HAP-1 (cell line): ENCODE measurements at regions of chr14 and their contacts with region 1.

Region 1: GRCh38 chr14:105659960-105660476 is 133.6 kb downstream of the TMEM121 start:
- DNase-seq: no peak
- H3K4me3 ChIP-seq: no peak overlapping the region
- H3K4me1 ChIP-seq: no peaks in the 10 kb centered on the region
- H3K27me3 ChIP-seq: no peaks in the 10 kb centered on the region

Region 2: GRCh38 chr14:105499256-105500030 is 160.6 kb before region 1 on chr14:
- in situ Hi-C with region 1: no loop called
- DNase-seq: peak in 1 of 2 experiments; percentile 35
- H3K4me3 ChIP-seq: no peak overlapping the region
- H3K4me1 ChIP-seq: no peaks in the 10 kb centered on the region
- H3K27me3 ChIP-seq: no peaks in the 10 kb centered on the region

Region 3: DNA sequence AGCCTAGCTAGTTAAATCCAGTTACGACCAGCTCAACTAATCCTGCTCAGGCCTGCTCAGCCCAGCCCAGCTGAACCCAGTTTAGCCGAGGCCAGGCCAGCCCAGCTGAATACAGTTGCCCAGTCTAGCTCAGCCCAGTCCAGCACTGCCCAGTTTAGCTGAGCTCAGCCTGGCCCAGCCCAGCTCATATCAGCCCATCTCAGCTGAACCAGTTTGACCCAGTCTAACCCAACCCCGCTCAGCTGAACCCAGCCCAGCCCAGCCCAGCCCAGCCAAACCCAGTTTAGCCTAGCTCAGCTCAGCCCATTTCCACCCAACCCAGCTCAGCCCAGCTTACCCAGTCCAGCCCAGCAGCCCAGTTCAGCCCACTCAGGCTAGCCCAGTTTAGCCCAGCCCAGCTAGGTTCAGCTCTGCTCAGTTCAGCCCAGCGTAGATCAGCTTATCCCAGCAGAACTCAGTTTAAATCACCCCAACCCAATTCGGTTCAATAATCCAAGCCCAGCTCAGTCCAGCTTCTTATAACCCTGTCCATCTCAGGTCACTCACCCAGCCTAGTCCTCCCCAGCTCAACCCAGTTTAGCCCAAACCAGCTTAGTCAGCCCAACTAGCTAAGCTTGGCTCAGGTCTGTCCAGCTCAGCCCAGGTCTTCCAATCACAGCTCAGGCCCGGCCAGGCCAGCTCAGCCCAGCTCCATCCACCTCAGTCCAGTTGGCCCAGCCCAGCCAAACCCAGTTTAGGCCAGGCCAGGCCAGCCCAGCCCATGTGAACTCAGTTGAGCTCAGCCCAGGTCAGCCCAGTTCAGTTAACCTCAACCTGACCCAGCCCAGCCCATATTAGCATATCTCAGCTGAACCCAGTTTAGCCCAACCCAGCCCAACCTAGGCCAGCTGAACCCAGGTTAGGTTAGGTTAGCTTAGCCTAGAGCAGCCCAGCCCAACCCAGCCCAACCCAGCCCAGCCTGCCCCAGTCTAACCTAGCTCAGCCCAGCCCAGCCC is 56.9 kb before region 1 on chr14:
- in situ Hi-C with region 1: loop called (anchors 10 kb)
- DNase-seq: no peak
- H3K4me3 ChIP-seq: no peak overlapping the region
- H3K4me1 ChIP-seq: no peaks in the 10 kb centered on the region
- H3K27me3 ChIP-seq: no peaks in the 10 kb centered on the region